ENCODE measurements at regions of chr16 and their contacts with region 1.

Region 1: DNA sequence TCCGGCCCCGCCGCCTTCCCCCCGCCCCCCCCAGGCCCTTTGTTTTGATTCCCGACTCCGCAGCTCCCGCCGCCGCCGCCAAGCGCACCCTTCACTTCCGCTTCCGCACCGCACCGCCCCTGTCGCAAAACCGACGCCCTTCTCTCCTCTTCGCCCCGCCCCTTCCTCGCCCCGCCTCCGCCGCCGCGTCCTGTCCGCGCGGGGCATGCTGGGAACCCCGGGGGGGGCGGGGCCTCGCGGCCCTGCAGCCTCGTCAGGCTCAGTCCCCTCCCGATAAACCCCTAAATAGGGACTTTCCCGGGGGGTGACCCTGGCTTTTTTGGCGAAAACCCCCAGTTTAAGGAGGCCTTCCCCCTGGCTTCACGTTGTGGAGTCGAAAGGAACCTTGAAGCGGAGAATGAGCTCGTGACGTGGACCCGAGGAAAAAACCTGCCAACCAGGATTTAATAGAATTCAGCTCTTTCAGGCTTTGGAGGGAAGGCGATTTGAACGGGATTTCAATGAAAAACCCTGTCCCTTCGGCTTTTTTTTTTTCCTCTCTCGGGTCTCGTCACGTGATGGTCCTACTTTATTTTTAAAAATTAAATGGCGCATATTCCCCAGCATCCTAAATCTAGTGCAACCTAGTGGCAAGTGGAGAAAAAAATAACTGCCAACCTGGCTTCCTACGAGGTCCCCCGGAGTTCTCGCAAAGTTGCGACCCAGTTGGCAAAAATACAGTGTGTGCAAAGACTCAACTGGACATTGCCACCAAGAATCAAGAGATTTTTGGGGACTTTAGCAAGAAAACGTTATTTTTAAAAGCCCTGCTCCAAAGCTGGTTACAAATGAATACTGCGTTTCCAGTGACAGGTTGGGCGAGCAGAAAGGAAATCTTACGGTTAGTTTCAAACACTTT is at the start of gene MARF1:
- DNase-seq: peak; percentile 100
- ATAC-seq: peak; percentile 70
- H3K4me3 Mint-ChIP-seq: peak within 1 kb of the TSS; percentile 84
- H3K27ac Mint-ChIP-seq: peak within 1 kb of the TSS; percentile 98
- H3K4me1 Mint-ChIP-seq: peaks cover 52% of the 10 kb centered on the region
- H3K27me3 Mint-ChIP-seq: no peaks in the 10 kb centered on the region
- total RNA-seq, gene MARF1: 50.2 to 72.5 TPM

Region 2: DNA sequence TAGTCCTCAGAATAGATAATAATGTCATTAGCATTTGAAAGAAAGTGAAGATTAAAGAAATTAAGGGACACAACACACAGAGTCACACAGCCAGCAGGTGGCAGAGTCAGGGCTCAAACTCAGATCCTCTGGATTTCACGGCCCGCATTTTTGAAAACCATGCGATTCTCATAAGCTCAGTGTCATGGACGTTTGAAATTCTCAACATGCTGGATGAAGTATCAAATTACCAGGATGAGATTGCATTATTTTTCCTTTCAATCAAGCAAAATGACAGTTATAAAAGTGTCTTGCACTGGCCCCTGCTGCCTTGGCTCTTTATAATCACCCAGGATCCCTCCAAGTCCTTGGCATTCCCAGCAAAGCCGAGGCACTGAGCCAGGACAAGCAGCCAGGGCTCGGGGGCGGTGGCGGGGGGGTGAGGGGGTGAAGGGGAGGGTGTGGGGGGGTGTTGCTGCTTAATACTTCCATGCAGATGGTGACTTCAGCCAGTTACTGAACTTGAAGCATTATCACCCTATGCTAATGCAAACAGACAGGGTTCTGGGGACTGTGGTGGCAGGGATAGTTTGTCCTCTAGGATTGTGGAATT is 215.6 kb before region 1 on chr16:
- CTCF ChIA-PET with region 1: interaction called, 7 read pairs
- POLR2A ChIA-PET with region 1: no interaction called
- intact Hi-C with region 1: loop called in 1 of 2 experiments (anchors 2 kb)
- DNase-seq: peak; percentile 78
- ATAC-seq: peak; percentile 74
- H3K4me3 Mint-ChIP-seq: no peak overlapping the region
- H3K27ac Mint-ChIP-seq: no peak overlapping the region
- H3K4me1 Mint-ChIP-seq: peaks cover 2% of the 10 kb centered on the region
- H3K27me3 Mint-ChIP-seq: peaks cover 3% of the 10 kb centered on the region

Region 3: DNA sequence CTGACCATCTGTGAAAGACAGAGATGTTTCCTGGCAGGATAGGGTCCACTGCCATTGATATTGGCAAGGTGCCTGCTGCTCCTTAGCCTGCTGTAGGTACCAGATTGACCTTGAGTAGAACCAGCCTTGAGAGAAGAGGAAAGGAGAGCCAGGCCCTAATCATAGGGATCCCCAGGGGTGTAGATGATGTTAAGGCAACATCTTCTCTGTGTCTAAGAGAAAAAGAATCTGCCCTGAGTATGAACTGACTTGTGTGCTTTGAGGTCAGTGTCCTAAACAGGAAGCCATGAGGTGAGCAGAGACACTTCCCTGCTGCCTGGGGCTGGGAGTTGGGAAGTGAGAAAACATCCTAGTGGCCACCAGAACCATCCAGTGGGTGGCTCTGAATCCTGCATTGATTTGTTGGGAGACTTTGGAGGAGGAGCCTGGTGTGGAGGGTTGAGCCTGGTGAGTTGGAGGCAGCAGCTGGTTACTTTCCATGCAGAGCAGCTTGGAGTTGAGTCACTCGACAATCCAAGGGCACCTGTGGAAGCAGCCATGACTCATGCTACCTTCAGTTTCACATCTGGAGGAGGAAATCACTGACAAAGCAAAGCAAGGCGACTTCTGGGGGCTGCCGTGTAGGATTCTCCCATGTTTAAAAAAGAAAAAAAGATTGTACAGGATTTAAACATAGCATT is 161.1 kb before region 1 on chr16:
- CTCF ChIA-PET with region 1: no interaction called
- POLR2A ChIA-PET with region 1: no interaction called
- intact Hi-C with region 1: loop called in 1 of 2 experiments (anchors 5 kb)
- DNase-seq: peak; percentile 75
- ATAC-seq: peak; percentile 96
- H3K4me3 Mint-ChIP-seq: no peak overlapping the region
- H3K27ac Mint-ChIP-seq: peak overlapping the region; percentile 61
- H3K4me1 Mint-ChIP-seq: peaks cover 24% of the 10 kb centered on the region
- H3K27me3 Mint-ChIP-seq: peaks cover 2% of the 10 kb centered on the region

Region 4: GRCh38 chr16:15888072-15888976 is 245.0 kb after region 1 on chr16 and contains the start of gene CEP20:
- CTCF ChIA-PET with region 1: no interaction called
- POLR2A ChIA-PET with region 1: no interaction called
- intact Hi-C with region 1: loop called in 1 of 2 experiments (anchors 1 kb)
- DNase-seq: peak; percentile 100
- ATAC-seq: peak; percentile 99
- H3K4me3 Mint-ChIP-seq: peak within 1 kb of the TSS; percentile 92
- H3K27ac Mint-ChIP-seq: peak within 1 kb of the TSS; percentile 99
- H3K4me1 Mint-ChIP-seq: peaks cover 28% of the 10 kb centered on the region
- H3K27me3 Mint-ChIP-seq: no peaks in the 10 kb centered on the region
- total RNA-seq, gene CEP20: 39.3 to 51.0 TPM

Region 5: DNA sequence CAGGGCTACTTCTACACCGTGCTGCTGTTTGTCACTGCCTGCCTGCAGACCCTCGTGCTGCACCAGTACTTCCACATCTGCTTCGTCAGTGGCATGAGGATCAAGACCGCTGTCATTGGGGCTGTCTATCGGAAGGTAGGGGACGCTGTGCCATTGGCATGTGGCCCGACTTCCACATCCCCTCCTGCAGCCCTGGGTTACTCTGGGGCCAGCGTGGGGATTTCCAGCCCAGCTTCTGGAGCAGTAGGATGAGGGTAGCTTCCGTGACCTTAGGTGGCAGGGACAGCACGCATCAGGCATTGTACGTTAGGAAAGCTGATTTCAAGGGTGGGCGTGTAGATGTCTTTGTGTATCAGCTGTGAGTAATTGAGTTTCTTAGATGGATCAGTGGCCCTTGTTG is 402.6 kb after region 1 on chr16:
- CTCF ChIA-PET with region 1: no interaction called
- POLR2A ChIA-PET with region 1: no interaction called
- intact Hi-C with region 1: no loop called
- DNase-seq: peak; percentile 36
- ATAC-seq: no peak
- H3K4me3 Mint-ChIP-seq: no peak overlapping the region
- H3K27ac Mint-ChIP-seq: no peak overlapping the region
- H3K4me1 Mint-ChIP-seq: peaks cover 6% of the 10 kb centered on the region
- H3K27me3 Mint-ChIP-seq: no peaks in the 10 kb centered on the region